ENCODE measurements at regions of chr12 and their contacts with region 1.

Region 1: GRCh38 chr12:71415336-71416231 is 24.0 kb upstream of the LGR5 start:
- DNase-seq: peak; percentile 68
- H3K4me3 ChIP-seq: no peak overlapping the region
- H3K27ac ChIP-seq: no peak overlapping the region
- H3K4me1 ChIP-seq: no peaks in the 10 kb centered on the region
- H3K27me3 ChIP-seq: no peaks in the 10 kb centered on the region
- CTCF ChIP-seq: peak; percentile 91
- EP300 ChIP-seq: no peak
- RAD21 ChIP-seq: peak; percentile 90

Region 2: GRCh38 chr12:71392521-71393145 is 23.0 kb before region 1 on chr12:
- CTCF ChIA-PET with region 1: interaction called, 13 read pairs
- POLR2A ChIA-PET with region 1: no interaction called
- DNase-seq: peak; percentile 67
- H3K4me3 ChIP-seq: no peak overlapping the region
- H3K27ac ChIP-seq: no peak overlapping the region
- H3K4me1 ChIP-seq: peaks cover 0 to 5% of the 10 kb centered on the region in 2 experiments; a peak in 2 of 4 replicates
- H3K27me3 ChIP-seq: no peaks in the 10 kb centered on the region
- CTCF ChIP-seq: peak; percentile 82
- EP300 ChIP-seq: no peak
- RAD21 ChIP-seq: peak; percentile 76

Region 3: GRCh38 chr12:71426300-71427047 is 10.9 kb after region 1 on chr12:
- CTCF ChIA-PET with region 1: interaction called, 15 read pairs
- POLR2A ChIA-PET with region 1: no interaction called
- DNase-seq: no peak
- H3K4me3 ChIP-seq: no peak overlapping the region
- H3K27ac ChIP-seq: peak overlapping the region; percentile 19 to 53; a peak in 2 of 4 replicates
- H3K4me1 ChIP-seq: peaks cover 0 to 2% of the 10 kb centered on the region in 2 experiments; a peak in 2 of 4 replicates
- H3K27me3 ChIP-seq: peaks cover 5% of the 10 kb centered on the region; the same call in 1 of the 2 replicates
- CTCF ChIP-seq: no peak
- EP300 ChIP-seq: no peak
- RAD21 ChIP-seq: no peak

Region 4: DNA sequence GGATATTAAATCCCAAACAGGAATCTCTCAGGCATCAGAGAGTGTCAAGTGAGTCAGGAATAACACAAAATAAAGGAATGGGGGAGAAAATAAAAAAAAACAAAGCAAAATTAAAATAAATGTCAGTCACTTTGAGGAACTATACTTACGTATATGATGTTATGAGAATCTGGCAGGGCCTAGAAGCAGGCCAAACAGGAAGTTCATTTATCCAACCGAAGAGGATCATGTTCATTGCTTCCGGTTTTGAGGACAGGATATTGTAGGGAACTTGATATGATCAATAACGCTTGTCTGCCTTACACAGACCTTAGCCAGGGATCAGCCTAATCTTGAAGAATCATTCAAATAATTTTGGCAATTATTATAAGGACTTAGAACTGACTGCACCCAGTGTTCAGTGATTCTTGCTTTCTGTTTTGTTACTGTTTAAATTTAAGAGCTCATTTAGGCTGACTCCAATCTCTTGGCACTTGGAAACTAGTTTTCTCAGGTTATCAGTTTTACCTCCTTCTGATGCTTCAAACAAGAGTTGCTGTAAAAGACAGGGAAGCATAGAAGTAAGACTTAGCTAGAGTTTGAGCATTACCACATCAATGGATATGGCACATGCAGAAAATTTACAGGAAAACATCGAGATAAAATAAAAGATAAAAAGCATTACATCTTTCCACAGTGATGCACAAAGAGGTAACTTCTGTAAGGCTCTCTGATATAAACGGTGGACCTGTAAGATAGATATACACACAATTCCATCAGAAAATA is 194.6 kb after region 1 on chr12:
- CTCF ChIA-PET with region 1: interaction called, 11 read pairs
- POLR2A ChIA-PET with region 1: no interaction called
- DNase-seq: no peak
- H3K4me3 ChIP-seq: no peak overlapping the region
- H3K27ac ChIP-seq: no peak overlapping the region; a peak in 1 of 4 replicates
- H3K4me1 ChIP-seq: no peaks in the 10 kb centered on the region; a peak in 1 of 4 replicates
- H3K27me3 ChIP-seq: no peaks in the 10 kb centered on the region
- CTCF ChIP-seq: no peak
- EP300 ChIP-seq: no peak
- RAD21 ChIP-seq: no peak

Region 5: GRCh38 chr12:71746983-71747611 is 331.5 kb after region 1 on chr12:
- CTCF ChIA-PET with region 1: interaction called, 41 read pairs
- POLR2A ChIA-PET with region 1: no interaction called
- DNase-seq: peak; percentile 49
- H3K4me3 ChIP-seq: no peak overlapping the region; a peak in 1 of 4 replicates
- H3K27ac ChIP-seq: no peak overlapping the region
- H3K4me1 ChIP-seq: no peaks in the 10 kb centered on the region
- H3K27me3 ChIP-seq: peaks cover 5% of the 10 kb centered on the region; the same call in 1 of the 2 replicates
- CTCF ChIP-seq: peak; percentile 88
- EP300 ChIP-seq: no peak
- RAD21 ChIP-seq: peak; percentile 92